Activated CD4-positive, alpha-beta T cell treated with anti-CD3 and anti-CD28 coated beads for 36 hours (primary cell): ENCODE measurements at regions of chr9 and their contacts with region 1.

Region 1: DNA sequence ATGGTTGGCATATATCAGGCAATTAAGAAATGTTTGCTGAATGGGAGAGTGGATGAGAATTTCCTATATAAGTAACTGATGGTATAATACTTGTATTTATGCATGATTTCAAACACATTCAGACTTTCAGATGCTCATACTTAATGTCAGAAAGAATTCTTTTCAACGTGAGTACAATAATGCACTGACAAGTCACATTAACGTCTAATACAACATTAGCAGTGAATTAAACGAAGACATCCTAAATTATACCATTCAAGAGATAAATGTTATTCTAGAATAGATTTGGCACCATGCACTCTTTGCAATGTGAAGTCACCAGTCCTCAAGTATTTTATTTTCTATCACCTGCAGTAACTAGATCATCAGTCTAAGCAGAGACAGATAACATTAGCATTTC is 712.9 kb downstream of the TLE1 start:
- DNase-seq: no peak
- ATAC-seq: no peak
- H3K4me3 Mint-ChIP-seq: no peak overlapping the region
- H3K27ac Mint-ChIP-seq: no peak overlapping the region
- H3K4me1 Mint-ChIP-seq: no peaks in the 10 kb centered on the region
- H3K27me3 Mint-ChIP-seq: no peaks in the 10 kb centered on the region

Region 2: DNA sequence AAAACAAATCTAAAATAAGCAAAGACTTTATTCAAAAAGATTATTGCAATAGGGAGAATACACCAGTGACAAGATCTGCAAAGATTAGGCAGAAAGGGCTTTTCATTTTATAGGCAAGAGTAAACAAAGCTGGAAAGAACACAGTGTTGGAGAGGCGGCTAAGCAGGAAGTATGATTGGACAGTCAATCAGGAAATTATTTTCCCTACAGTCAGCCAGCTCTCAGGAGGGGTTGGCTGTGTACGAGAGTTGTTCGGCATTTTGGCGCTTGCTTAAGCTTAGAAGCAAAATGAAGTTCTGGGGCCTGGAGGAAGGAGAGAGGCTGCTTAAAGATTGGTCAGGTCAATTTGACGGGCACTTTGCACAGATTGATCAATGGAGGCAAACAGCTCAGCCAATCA is 374.1 kb before region 1 on chr9:
- CTCF ChIA-PET with region 1: no interaction called
- POLR2A ChIA-PET with region 1: no interaction called
- intact Hi-C with region 1: no loop called
- DNase-seq: no peak
- ATAC-seq: no peak
- H3K4me3 Mint-ChIP-seq: no peak overlapping the region
- H3K27ac Mint-ChIP-seq: no peak overlapping the region
- H3K4me1 Mint-ChIP-seq: no peaks in the 10 kb centered on the region
- H3K27me3 Mint-ChIP-seq: no peaks in the 10 kb centered on the region

Region 3: GRCh38 chr9:81045658-81046057 is 69.3 kb after region 1 on chr9:
- CTCF ChIA-PET with region 1: no interaction called
- POLR2A ChIA-PET with region 1: no interaction called
- intact Hi-C with region 1: loop called in 1 of 2 experiments (anchors 10 kb)
- DNase-seq: no peak
- ATAC-seq: no peak
- H3K4me3 Mint-ChIP-seq: no peak overlapping the region
- H3K27ac Mint-ChIP-seq: no peak overlapping the region
- H3K4me1 Mint-ChIP-seq: no peaks in the 10 kb centered on the region
- H3K27me3 Mint-ChIP-seq: no peaks in the 10 kb centered on the region